HEK293 (cell line): ENCODE measurements at regions of chr7 and their contacts with region 1.

Region 1: GRCh38 chr7:95723592-95724180 is 48.7 kb upstream of the DYNC1I1 start:
- H3K4me3 ChIP-seq: no peak overlapping the region
- H3K27ac ChIP-seq: no peak overlapping the region
- H3K4me1 ChIP-seq: no peaks in the 10 kb centered on the region
- CTCF ChIP-seq: peak; percentile 68

Region 2: GRCh38 chr7:94975336-94975735 is 748.4 kb before region 1 on chr7:
- CTCF ChIA-PET with region 1: no interaction called
- POLR2A ChIA-PET with region 1: no interaction called
- H3K4me3 ChIP-seq: no peak overlapping the region
- H3K27ac ChIP-seq: no peak overlapping the region
- H3K4me1 ChIP-seq: peaks cover 29% of the 10 kb centered on the region
- CTCF ChIP-seq: no peak

Region 3: GRCh38 chr7:95859434-95859833 is 135.7 kb after region 1 on chr7:
- CTCF ChIA-PET with region 1: interaction called, 10 read pairs
- POLR2A ChIA-PET with region 1: no interaction called
- H3K4me3 ChIP-seq: no peak overlapping the region
- H3K27ac ChIP-seq: no peak overlapping the region
- H3K4me1 ChIP-seq: no peaks in the 10 kb centered on the region
- CTCF ChIP-seq: no peak

Region 4: DNA sequence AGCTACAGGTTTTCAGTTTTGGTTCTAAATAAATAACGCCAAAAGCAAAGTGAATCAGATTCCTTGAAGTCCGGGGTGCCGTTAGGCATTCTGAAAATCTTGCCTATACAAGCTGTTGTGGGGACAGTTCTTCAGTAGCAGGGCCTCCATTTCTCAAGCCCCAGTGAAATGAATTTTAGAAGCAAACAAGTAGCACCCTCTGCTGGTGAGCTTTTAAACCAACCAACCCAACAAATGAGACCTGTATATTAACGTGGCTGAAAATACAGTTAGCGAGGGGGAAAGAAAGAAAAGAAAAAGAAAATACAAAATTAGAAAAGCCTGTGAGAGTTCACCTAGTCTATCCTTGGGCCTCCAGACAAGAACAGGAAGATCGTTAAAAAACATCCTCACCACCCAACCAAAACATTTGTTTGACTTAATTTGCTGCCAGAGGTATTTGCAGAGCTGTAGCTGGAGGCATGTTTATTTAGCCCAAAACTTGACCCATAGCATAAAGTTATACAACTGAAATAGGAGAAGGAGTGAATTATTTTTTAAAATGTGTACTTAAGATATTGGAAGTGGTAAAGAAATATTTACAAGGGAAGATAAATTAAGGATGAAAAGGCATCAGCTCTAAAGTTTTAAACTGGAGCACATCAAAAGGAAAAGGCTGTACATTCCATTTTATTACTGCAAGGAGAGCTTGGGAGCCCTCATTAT is 147.5 kb after region 1 on chr7:
- CTCF ChIA-PET with region 1: interaction called, 205 read pairs
- POLR2A ChIA-PET with region 1: interaction called, 3 read pairs
- H3K4me3 ChIP-seq: no peak overlapping the region
- H3K27ac ChIP-seq: 0 out of 2 replicates have a peak overlapping the region, but pooled peaks have one; percentile 35
- H3K4me1 ChIP-seq: peaks cover 5% of the 10 kb centered on the region; the same call in 1 of the 2 replicates
- CTCF ChIP-seq: peak; percentile 51; the same call in 1 of the 2 replicates

Region 5: DNA sequence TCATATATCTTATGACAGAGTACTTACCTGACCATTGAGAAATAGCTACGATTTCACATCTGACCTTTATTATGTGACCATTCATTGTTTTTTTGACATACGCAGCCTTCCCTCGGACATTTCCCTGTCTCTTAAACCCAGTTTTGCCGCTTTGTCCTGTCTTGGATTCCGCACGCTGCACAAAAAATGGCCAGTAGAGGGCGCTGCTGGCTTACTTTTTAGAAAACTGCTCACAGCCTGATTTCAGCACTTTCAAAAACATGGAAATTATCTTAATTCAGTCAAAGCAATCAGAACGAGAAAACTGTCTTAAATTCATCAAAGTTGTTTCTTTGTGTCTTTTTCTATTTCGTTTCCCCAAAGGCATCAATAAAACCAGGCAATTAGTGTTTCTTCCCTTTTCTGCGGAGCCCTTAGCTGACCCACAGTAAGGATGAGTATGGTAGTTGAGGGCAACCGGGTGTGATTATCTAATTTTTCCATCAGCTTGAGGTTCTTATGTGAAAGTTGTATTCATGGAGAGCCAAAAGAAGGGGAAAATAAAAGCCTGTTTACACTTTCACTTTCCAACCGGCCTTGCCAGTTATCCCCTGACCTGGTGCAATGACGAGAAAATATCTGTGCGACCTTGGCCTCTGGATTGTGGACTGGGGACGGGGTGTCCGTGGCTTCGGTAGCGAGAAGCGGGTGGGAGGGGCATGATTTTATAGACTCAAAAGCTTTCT is 193.0 kb after region 1 on chr7:
- CTCF ChIA-PET with region 1: interaction called, 13 read pairs
- POLR2A ChIA-PET with region 1: no interaction called
- H3K4me3 ChIP-seq: no peak overlapping the region
- H3K27ac ChIP-seq: no peak overlapping the region
- H3K4me1 ChIP-seq: no peaks in the 10 kb centered on the region
- CTCF ChIP-seq: peak; percentile 74